Dendritic cell treated with granulocyte-macrophage colony-stimulating factor and Interleukin-4, amounts not matched to agents 40 ng/mL and 50 ng/mL, for 4 days (primary cell): ENCODE measurements at regions of chr22 and their contacts with region 1.

Region 1: GRCh38 chr22:50030297-50031188 is 18.0 kb upstream of the IL17REL start:
- H3K4me3 Mint-ChIP-seq: no peak overlapping the region
- H3K27ac Mint-ChIP-seq: no peak overlapping the region
- H3K4me1 Mint-ChIP-seq: peaks cover 6% of the 10 kb centered on the region
- H3K27me3 Mint-ChIP-seq: peaks cover 49% of the 10 kb centered on the region

Region 2: DNA sequence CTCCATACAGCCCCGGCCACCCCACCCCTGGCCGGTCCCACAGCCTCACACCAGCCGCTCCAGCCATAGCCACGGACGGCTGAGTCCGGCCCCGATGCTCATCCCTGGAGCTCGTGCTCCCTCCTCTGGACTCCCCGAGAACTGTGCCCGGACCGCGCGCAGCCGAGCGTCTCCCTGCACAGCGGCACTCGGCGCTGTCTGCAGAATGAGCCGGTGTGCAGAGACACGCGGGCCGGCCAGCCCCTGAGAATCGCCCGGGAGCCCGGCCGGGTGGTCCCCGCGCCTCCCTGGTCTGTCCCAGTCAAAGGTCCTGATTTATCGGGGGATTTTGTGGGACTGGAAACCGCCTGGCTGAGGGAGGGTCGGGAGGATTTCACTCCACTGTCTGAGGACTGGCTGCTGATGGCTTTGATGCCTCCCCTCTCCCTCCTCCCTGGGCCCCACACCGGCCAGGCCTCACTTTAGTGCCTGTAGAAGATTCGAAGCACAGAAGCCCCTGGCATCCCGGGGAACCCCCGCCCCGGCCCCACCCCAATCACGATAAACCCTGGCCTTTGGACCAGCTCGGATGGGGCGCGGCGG is 305.6 kb before region 1 on chr22:
- intact Hi-C with region 1: no loop called
- H3K4me3 Mint-ChIP-seq: no peak overlapping the region
- H3K27ac Mint-ChIP-seq: no peak overlapping the region
- H3K4me1 Mint-ChIP-seq: peaks cover 9% of the 10 kb centered on the region
- H3K27me3 Mint-ChIP-seq: peaks cover 70% of the 10 kb centered on the region

Region 3: GRCh38 chr22:49992921-49993648 is 37.5 kb before region 1 on chr22:
- intact Hi-C with region 1: loop called (anchors 5 kb)
- H3K4me3 Mint-ChIP-seq: no peak overlapping the region
- H3K27ac Mint-ChIP-seq: no peak overlapping the region
- H3K4me1 Mint-ChIP-seq: peaks cover 24% of the 10 kb centered on the region
- H3K27me3 Mint-ChIP-seq: peaks cover 27% of the 10 kb centered on the region